Tibial artery (tissue), 4 donors: ENCODE measurements at regions of chr7 and their contacts with region 1.

Region 1: DNA sequence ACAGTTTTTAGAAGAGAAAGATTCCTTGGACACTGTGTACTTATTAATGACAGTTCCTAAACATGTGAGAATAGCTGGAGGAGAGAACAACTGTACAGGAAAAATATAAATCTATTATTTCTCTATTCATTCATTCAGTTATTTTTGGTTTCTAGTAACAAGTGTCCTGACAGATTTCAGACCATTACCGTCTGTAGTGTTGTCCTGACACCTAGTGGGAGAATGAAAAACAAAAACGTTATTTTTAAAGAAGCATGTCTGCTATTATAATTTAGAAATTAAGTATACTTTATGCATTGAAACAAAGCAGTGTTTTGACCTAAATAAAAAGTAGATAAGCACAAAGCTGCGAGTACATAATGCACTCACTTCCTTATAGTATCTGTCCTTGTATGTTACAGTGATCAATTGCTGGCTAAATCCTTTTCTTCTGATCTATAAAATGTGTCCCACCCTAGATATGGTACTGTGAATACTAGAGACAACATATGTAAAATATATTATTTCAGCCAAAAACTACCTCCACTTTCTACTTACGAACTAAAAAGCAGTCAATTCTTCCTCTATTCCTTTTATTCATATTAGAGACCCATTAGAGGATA is 575.6 kb downstream of the ARL4A start:
- DNase-seq: no peak
- H3K4me3 ChIP-seq: no peak overlapping the region
- H3K27ac ChIP-seq: no peak overlapping the region
- H3K4me1 ChIP-seq: no peaks in the 10 kb centered on the region
- H3K27me3 ChIP-seq: no peaks in the 10 kb centered on the region
- CTCF ChIP-seq: peak; percentile 50 to 54

Region 2: GRCh38 chr7:12524794-12525386 is 738.1 kb before region 1 on chr7:
- intact Hi-C with region 1: loop called (anchors 5 kb)
- DNase-seq: no peak
- H3K4me3 ChIP-seq: no peak overlapping the region
- H3K27ac ChIP-seq: no peak overlapping the region
- H3K4me1 ChIP-seq: no peaks in the 10 kb centered on the region
- H3K27me3 ChIP-seq: no peaks in the 10 kb centered on the region
- CTCF ChIP-seq: peak; percentile 47 to 49

Region 3: DNA sequence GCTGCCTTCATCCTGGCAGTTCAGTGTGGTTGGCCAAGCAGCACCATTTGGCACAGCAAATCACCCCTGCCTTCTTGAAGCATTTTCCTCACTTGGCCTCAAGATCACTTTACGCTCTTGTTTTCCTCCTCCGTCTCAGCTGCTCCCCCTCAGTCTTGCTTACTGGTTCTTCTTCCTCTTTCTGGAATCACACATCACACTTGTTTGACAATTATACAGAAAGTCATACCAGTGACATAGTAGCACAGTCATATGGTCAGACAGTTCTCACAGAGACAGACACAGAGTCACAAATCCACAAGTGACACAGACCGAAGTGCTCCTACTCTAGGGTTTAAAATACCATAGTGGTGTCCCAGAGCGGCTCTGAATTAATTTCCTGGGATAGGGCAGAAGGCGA is 619.4 kb before region 1 on chr7:
- intact Hi-C with region 1: loop called (anchors 5 kb)
- DNase-seq: no peak
- H3K4me3 ChIP-seq: no peak overlapping the region
- H3K27ac ChIP-seq: no peak overlapping the region
- H3K4me1 ChIP-seq: no peaks in the 10 kb centered on the region
- H3K27me3 ChIP-seq: no peaks in the 10 kb centered on the region
- CTCF ChIP-seq: no peak